PC-9 (cell line): ENCODE measurements at regions of chr3 and their contacts with region 1.

Region 1: GRCh38 chr3:5232570-5232969 is 45.1 kb downstream of the EDEM1 start:
- DNase-seq: no peak
- H3K4me3 ChIP-seq: no peak overlapping the region
- H3K27ac ChIP-seq: no peak overlapping the region
- H3K4me1 ChIP-seq: no peaks in the 10 kb centered on the region
- H3K27me3 ChIP-seq: no peaks in the 10 kb centered on the region
- CTCF ChIP-seq: no peak

Region 2: DNA sequence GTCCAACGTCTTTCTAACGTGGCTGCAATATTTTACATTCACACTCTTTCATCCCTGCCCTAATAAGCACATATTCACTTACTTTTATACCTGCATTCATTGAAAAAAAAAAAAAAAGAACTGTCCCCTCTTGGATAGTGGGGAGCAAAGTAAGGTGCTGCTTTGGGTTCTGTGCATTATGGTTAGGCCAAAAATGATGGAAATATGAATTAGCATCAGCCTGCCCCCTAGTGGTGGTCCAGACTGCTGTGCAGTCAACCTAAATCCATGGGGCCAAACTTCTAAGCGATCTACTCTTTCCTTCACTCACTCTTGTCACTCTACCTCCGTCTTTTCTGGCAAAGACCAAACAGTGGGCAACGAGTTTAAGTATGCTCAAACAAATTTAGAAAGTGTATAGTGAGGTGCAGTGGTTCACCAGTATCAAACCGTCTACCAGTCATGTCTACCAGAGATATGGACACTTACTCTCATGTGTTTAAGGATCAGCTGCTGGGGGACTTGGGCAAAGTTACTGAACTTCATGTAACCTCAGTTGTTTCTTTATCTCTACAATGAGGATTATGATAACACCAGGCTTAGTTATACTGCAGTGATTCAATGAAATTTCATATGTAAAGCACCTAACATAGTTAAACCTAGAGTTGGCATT is 1566.8 kb after region 1 on chr3:
- CTCF ChIA-PET with region 1: no interaction called
- POLR2A ChIA-PET with region 1: no interaction called
- intact Hi-C with region 1: loop called (anchors 10 kb)
- DNase-seq: peak in 1 of 2 experiments; percentile 15
- H3K4me3 ChIP-seq: no peak overlapping the region
- H3K27ac ChIP-seq: no peak overlapping the region
- H3K4me1 ChIP-seq: no peaks in the 10 kb centered on the region
- H3K27me3 ChIP-seq: no peaks in the 10 kb centered on the region
- CTCF ChIP-seq: peak; percentile 88

Region 3: DNA sequence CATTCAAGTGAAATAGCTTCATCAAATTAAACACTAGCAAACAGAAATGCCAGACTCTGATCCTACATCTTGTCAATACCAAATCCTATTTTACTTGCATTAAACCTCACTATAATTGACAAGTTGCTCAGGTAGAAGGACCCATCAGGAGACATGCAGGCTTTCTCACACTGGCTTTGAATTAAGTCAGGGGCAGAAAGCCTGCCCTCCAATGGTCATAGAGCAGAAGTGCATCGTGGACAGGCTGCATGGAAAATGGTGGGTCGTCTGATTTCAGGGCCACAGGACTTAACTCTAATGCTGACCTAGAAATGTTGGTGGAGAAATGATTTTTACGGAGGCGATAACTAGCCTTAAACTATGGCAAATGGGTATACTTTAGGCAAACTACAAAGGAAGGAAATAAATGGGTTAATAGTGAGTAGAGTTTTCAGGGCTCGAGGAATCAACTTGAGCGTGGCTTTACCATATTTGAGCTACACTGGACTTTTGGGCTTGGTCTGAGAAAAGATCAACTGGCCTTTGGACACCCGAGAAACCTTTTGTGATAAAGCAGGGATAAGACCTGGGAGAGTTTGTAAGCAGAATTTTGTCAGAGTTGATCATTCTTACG is 1912.2 kb after region 1 on chr3:
- CTCF ChIA-PET with region 1: no interaction called
- POLR2A ChIA-PET with region 1: no interaction called
- intact Hi-C with region 1: loop called (anchors 5 kb)
- DNase-seq: no peak
- H3K4me3 ChIP-seq: no peak overlapping the region
- H3K27ac ChIP-seq: no peak overlapping the region
- H3K4me1 ChIP-seq: no peaks in the 10 kb centered on the region
- H3K27me3 ChIP-seq: 0 out of 2 replicates have a peak, but pooled peaks cover 4% of the 10 kb centered on the region
- CTCF ChIP-seq: peak; percentile 71